Activated T-helper 2 cell treated with anti-CD3 and anti-CD28 coated beads, Interferon-gamma antibody, Interleukin-2, Interleukin-4, amounts not matched to agents 10 μg/mL and 5 μg/mL and 100 μg/mL, durations not matched to agents 14 hours and 24 hours and 36 hours (primary cell): ENCODE measurements at regions of chr14 and their contacts with region 1.

Region 1: GRCh38 chr14:106631879-106632278 is 1105.5 kb downstream of the TMEM121 start:
- DNase-seq: no peak
- H3K4me3 Mint-ChIP-seq: no peak overlapping the region
- H3K27ac Mint-ChIP-seq: no peak overlapping the region
- H3K4me1 Mint-ChIP-seq: peaks cover 3% of the 10 kb centered on the region
- H3K27me3 Mint-ChIP-seq: peaks cover 43% of the 10 kb centered on the region

Region 2: GRCh38 chr14:106436310-106436905 is 195.5 kb before region 1 on chr14:
- intact Hi-C with region 1: no loop called
- DNase-seq: peak; percentile 24
- H3K4me3 Mint-ChIP-seq: no peak overlapping the region
- H3K27ac Mint-ChIP-seq: no peak overlapping the region
- H3K4me1 Mint-ChIP-seq: no peaks in the 10 kb centered on the region
- H3K27me3 Mint-ChIP-seq: peaks cover 26% of the 10 kb centered on the region

Region 3: DNA sequence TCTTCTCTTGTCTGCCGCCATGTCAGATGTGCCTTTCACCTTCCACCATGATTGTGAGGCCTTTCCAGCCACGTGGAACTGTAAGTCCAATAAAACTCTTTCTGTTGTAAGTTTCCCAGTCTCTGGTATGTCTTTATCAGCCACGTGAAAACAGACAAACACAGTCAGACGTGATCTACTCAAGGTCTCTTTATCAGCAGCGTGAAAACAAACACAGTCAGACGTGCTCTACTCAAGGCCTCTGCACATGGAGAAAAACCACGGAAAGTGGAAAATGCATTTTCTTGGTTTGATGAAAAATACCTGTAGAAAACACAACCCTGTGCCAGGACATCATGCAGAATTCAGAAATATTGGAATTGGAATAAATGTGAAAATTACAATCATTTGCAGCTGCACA is 10.2 kb after region 1 on chr14:
- intact Hi-C with region 1: loop called (anchors 1 kb)
- DNase-seq: no peak
- H3K4me3 Mint-ChIP-seq: no peak overlapping the region
- H3K27ac Mint-ChIP-seq: no peak overlapping the region
- H3K4me1 Mint-ChIP-seq: no peaks in the 10 kb centered on the region
- H3K27me3 Mint-ChIP-seq: peaks cover 14% of the 10 kb centered on the region

Region 4: GRCh38 chr14:106652502-106652901 is 20.6 kb after region 1 on chr14:
- intact Hi-C with region 1: no loop called
- DNase-seq: no peak
- H3K4me3 Mint-ChIP-seq: no peak overlapping the region
- H3K27ac Mint-ChIP-seq: no peak overlapping the region
- H3K4me1 Mint-ChIP-seq: peaks cover 5% of the 10 kb centered on the region
- H3K27me3 Mint-ChIP-seq: peaks cover 43% of the 10 kb centered on the region